Activated CD8-positive, alpha-beta memory T cell treated with anti-CD3 and anti-CD28 coated beads, Interleukin-2, amount 10 ng/mL, durations not matched to agents 7 days and 5 days (primary cell): ENCODE measurements at regions of chr4 and their contacts with region 1.

Region 1: DNA sequence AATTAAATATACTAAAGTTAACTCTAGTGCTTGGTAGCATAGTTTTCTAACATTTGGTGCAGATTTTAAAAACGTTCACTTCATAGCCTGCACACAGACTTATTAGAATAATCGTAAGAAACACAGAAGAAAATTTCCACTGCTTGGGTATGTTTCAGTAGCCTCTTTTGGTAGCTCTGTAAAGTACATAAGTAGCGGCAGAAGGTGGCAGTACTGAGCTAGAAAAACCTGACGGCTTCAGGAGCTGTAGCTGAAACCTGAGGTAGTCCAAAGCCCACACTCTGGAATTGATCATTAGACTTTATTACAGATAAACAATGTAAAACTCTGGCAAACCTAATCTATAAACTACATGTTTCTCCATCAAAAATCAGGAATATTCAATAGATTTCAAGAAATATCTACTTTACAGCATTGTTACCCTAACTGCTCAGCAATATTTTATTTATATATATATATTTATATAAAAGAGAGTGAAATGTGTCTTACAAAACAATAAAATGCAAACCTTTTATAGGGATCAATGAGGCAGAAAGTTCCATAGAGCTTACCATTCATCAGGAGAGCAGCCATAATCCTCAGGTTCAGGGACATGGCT is 88.2 kb downstream of the ATP8A1 start:
- DNase-seq: peak; percentile 77
- ATAC-seq: peak; percentile 89
- H3K4me3 Mint-ChIP-seq: no peak overlapping the region
- H3K27ac Mint-ChIP-seq: no peak overlapping the region
- H3K4me1 Mint-ChIP-seq: no peaks in the 10 kb centered on the region
- H3K27me3 Mint-ChIP-seq: no peaks in the 10 kb centered on the region

Region 2: GRCh38 chr4:42401171-42401570 is 167.5 kb before region 1 on chr4:
- CTCF ChIA-PET with region 1: no interaction called
- DNase-seq: no peak
- ATAC-seq: no peak
- H3K4me3 Mint-ChIP-seq: no peak overlapping the region
- H3K27ac Mint-ChIP-seq: no peak overlapping the region
- H3K4me1 Mint-ChIP-seq: peaks cover 25% of the 10 kb centered on the region
- H3K27me3 Mint-ChIP-seq: peaks cover 63% of the 10 kb centered on the region

Region 3: DNA sequence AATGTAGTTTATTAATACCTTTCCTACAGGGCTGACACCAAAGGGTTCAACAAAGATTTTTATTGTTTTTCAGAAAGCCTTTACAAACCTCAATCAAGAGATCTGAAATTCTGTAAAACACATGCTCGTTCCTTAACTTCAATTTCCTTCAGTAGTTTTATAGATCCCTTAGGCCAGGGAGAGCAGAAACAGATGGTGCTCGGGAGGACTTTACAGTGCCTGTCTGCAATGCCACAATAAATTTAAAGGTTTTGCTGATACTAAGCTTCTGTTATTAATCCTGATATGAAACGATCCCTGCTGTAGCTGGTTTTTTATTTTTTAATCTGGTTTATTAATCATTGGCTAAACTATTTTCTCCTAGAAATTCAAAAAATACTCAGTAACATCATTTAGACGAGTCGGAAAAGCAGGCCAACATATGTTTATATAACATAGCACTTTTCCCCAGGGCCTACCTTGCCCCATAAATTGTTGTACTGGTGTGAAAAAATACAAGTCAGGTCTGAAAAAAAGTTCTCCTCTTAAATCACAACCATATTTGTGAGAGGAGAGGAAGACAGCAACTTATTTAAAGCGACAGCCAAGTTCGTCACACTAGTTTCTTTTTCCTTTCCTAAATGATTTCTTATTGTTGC is 131.7 kb before region 1 on chr4:
- CTCF ChIA-PET with region 1: no interaction called
- DNase-seq: no peak
- ATAC-seq: no peak
- H3K4me3 Mint-ChIP-seq: no peak overlapping the region
- H3K27ac Mint-ChIP-seq: no peak overlapping the region
- H3K4me1 Mint-ChIP-seq: no peaks in the 10 kb centered on the region
- H3K27me3 Mint-ChIP-seq: no peaks in the 10 kb centered on the region

Region 4: DNA sequence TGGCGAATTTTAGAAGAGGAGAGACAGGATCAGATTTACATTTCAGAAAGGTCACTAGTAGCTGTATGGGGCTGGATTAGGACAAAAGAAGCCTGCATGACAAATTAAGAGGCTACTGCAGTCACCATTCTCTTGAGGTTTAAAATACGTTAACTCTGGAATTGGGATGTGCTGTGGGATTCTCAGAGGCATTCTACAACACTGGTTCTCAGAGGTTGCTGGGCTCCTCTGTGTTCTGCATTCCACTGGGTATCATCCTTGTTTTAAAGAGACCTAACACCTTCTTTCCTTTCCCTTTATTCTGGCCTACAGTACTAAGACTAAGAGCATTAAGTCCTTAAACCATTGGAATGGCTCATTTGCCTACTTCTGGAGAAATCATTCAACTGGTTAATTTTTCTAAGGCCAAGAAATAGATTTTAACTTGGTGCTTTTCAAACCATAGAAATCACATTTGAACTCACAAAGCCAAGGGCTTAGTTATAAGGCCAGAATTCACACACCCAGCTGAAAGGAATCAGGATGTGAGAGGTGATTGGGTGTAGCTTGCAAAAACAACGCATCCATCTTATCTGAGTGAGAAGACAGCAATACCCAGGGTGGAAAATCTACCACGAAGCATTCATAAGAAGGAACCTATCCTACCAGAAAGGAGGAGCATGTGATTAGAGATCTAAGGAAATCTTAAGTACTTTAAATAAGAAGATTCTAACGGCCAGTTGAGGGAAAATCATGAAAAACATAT is 54.8 kb before region 1 on chr4:
- CTCF ChIA-PET with region 1: no interaction called
- DNase-seq: no peak
- ATAC-seq: no peak
- H3K4me3 Mint-ChIP-seq: no peak overlapping the region
- H3K27ac Mint-ChIP-seq: no peak overlapping the region
- H3K4me1 Mint-ChIP-seq: no peaks in the 10 kb centered on the region
- H3K27me3 Mint-ChIP-seq: no peaks in the 10 kb centered on the region

Region 5: GRCh38 chr4:42555828-42556227 is 12.9 kb before region 1 on chr4:
- CTCF ChIA-PET with region 1: interaction called, 13 read pairs
- DNase-seq: no peak
- ATAC-seq: no peak
- H3K4me3 Mint-ChIP-seq: no peak overlapping the region
- H3K27ac Mint-ChIP-seq: no peak overlapping the region
- H3K4me1 Mint-ChIP-seq: no peaks in the 10 kb centered on the region
- H3K27me3 Mint-ChIP-seq: no peaks in the 10 kb centered on the region

Region 6: DNA sequence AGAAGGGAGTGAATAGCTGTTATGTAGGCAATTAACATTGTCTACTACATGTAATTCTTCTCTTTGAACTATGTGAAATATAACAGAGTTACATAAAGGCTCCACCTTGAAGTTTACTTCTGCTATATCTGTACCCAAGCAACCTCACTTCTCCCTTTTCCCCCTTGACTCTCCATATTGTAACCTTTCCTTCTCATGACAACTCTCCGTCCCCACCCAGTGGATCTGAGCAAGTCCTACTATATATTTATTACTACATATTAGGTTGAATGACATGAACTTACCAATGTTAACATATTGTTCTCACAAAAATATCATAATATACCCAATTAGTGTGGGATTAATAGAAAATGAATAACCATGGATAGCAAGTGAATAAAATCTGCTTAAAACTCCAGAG is 181.4 kb after region 1 on chr4:
- CTCF ChIA-PET with region 1: interaction called, 10 read pairs
- DNase-seq: no peak
- ATAC-seq: no peak
- H3K4me3 Mint-ChIP-seq: no peak overlapping the region
- H3K27ac Mint-ChIP-seq: no peak overlapping the region
- H3K4me1 Mint-ChIP-seq: no peaks in the 10 kb centered on the region
- H3K27me3 Mint-ChIP-seq: no peaks in the 10 kb centered on the region

Region 7: GRCh38 chr4:42768125-42768748 is 199.5 kb after region 1 on chr4:
- CTCF ChIA-PET with region 1: interaction called, 12 read pairs
- DNase-seq: no peak
- ATAC-seq: no peak
- H3K4me3 Mint-ChIP-seq: no peak overlapping the region
- H3K27ac Mint-ChIP-seq: no peak overlapping the region
- H3K4me1 Mint-ChIP-seq: no peaks in the 10 kb centered on the region
- H3K27me3 Mint-ChIP-seq: peaks cover 2% of the 10 kb centered on the region

Region 8: DNA sequence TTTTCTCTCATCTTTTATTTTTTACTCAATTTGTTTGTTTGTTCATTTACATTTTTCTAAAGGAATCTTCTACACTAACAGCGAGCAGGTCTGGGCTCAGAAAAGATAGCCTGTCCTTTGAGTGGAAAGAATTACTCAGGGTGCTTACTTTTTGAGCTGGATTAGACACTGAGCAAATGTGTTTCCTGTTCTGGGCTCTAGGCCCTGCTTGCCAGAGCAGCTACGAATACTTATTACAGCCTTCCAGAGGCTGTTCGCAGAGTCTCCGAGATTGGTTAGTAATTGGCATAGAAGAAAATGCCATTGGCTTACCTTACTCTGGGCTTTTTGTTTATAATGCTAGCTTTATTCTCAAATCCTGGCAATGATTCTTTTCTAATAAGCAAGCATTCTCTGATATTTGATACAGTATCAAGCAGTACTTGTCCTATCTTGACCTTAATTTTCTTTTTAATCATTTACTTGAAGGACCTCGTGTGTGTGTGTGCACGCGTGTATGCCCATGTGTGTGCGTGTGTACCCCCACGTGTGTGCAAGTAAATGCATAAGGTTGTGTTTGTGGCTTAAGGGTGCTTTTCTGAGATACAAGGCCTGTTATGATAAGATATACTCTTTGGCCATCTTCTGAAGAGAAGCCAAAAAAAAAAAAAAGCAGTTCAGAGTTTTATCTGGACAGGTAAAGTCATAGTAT is 247.6 kb after region 1 on chr4:
- CTCF ChIA-PET with region 1: interaction called, 13 read pairs
- DNase-seq: no peak
- ATAC-seq: no peak
- H3K4me3 Mint-ChIP-seq: no peak overlapping the region
- H3K27ac Mint-ChIP-seq: no peak overlapping the region
- H3K4me1 Mint-ChIP-seq: no peaks in the 10 kb centered on the region
- H3K27me3 Mint-ChIP-seq: peaks cover 19% of the 10 kb centered on the region

Region 9: DNA sequence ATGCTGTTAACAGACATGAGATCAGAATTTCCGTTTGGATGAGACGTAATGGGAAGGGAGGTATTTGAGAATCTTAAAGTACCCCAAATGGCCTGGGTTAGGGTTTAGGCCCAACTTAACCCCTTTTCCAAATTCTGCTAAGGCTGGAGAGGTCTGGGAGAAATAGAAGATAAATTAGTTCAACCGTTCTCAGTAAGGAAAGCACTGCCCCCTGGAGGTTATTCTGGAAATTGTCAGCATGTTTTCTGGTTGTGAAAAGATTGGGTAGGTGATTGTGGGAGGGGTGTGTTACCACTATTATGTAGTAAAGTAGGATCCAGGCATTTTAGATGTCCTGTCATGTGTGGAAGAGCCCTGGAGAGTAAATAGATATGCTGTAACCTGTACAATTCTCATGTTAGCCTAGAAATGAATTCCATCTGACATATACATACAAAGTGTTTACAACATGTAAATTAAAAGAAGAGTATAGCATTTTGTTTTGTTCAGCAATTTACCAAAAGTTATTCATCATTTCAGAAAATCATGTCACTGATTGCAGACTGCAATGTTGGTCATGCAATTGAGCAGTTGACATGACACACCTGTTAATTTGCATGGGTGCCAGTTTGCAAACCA is 297.0 kb after region 1 on chr4:
- CTCF ChIA-PET with region 1: interaction called, 21 read pairs
- DNase-seq: peak; percentile 57
- ATAC-seq: peak; percentile 51
- H3K4me3 Mint-ChIP-seq: no peak overlapping the region
- H3K27ac Mint-ChIP-seq: no peak overlapping the region
- H3K4me1 Mint-ChIP-seq: no peaks in the 10 kb centered on the region
- H3K27me3 Mint-ChIP-seq: peaks cover 20% of the 10 kb centered on the region